ENCODE measurements at regions of chr3 and their contacts with region 1.

Region 1: GRCh38 chr3:129316131-129317013 is 37.7 kb downstream of the HMCES start:
- DNase-seq: peak; percentile 80 to 96 (median 88)
- ATAC-seq: peak; percentile 75
- H3K4me3 ChIP-seq: peak overlapping the region; percentile 89
- H3K4me3 Mint-ChIP-seq: peak overlapping the region; percentile 70 to 97 (median 88)
- H3K27ac ChIP-seq: peak overlapping the region; percentile 88
- H3K27ac Mint-ChIP-seq: peak overlapping the region; percentile 80 to 94 (median 88)
- H3K4me1 ChIP-seq: peaks cover 5 to 10% of the 10 kb centered on the region in 2 donors
- H3K4me1 Mint-ChIP-seq: peaks cover 17 to 31% (median 24%) of the 10 kb centered on the region in 7 donors
- H3K27me3 ChIP-seq: no peaks in the 10 kb centered on the region
- H3K27me3 Mint-ChIP-seq: peaks cover 0 to 2% (median 0%) of the 10 kb centered on the region in 5 donors

Region 2: GRCh38 chr3:128051837-128052594 is 1264.4 kb before region 1 on chr3 and contains the start of gene SEC61A1:
- CTCF ChIA-PET with region 1: interaction called, 3 read pairs
- POLR2A ChIA-PET with region 1: no interaction called
- intact Hi-C with region 1: loop called in 1 of 2 experiments (anchors 5 kb)
- DNase-seq: peak; percentile 94 to 97 (median 95)
- ATAC-seq: peak; percentile 97
- H3K4me3 ChIP-seq: peak within 1 kb of the TSS; percentile 82
- H3K4me3 Mint-ChIP-seq: peak within 1 kb of the TSS; percentile 90 to 98 (median 96)
- H3K27ac ChIP-seq: peak within 1 kb of the TSS; percentile 95
- H3K27ac Mint-ChIP-seq: peak within 1 kb of the TSS; percentile 87 to 99 (median 97)
- H3K4me1 ChIP-seq: peaks cover 28 to 37% of the 10 kb centered on the region in 2 donors
- H3K4me1 Mint-ChIP-seq: peaks cover 36 to 44% (median 43%) of the 10 kb centered on the region in 7 donors
- H3K27me3 ChIP-seq: no peaks in the 10 kb centered on the region
- H3K27me3 Mint-ChIP-seq: peaks cover 0 to 17% (median 1%) of the 10 kb centered on the region in 5 donors
- total RNA-seq, gene SEC61A1: 110 to 219 (median 132) TPM

Region 3: DNA sequence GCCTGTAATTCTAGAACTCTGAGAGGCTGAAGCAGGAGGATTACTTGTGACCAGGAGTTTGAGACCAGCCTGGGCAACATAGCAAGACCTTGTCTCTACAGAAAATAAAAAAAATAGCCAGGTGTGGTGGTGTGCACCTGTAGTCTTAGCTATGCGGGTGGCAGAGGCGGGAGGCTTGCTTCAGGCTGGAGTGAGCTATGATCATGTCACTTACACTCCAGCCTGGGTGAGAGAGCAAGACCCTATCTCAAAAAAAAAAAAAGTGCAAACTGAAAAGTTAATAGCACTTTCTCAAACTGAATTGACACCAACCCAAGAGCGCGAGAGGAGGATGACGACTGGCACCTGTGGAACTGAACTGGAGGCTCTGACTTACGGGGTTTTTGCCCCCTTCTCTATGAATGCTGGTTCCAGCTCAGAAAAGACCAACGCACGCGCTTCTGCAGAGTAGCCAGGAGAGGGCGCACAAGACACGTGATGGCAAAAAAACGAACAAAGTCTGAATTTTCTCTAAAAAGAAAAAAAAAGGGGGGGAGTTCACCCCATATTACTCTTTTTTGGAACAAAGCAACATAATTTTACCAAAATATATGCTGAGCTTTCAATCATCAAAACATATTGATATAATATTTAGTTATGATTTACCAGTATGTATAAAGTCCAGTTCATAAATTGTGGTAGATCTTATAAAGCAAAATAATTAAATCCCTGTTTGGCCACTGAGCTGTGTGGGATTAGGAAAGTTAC is 346.2 kb before region 1 on chr3:
- CTCF ChIA-PET with region 1: interaction called, 5 read pairs
- POLR2A ChIA-PET with region 1: interaction called, 8 read pairs
- intact Hi-C with region 1: loop called (anchors 1 to 5 kb)
- DNase-seq: peak; percentile 43 to 75 (median 64)
- ATAC-seq: peak; percentile 89
- H3K4me3 ChIP-seq: no peak overlapping the region
- H3K4me3 Mint-ChIP-seq: peak overlapping the region in 1 of 10 donors; percentile 11
- H3K27ac ChIP-seq: no peak overlapping the region
- H3K27ac Mint-ChIP-seq: no peak overlapping the region
- H3K4me1 ChIP-seq: no peaks in the 10 kb centered on the region
- H3K4me1 Mint-ChIP-seq: peaks cover 0 to 7% (median 6%) of the 10 kb centered on the region in 7 donors
- H3K27me3 ChIP-seq: no peaks in the 10 kb centered on the region
- H3K27me3 Mint-ChIP-seq: peaks cover 0 to 5% (median 0%) of the 10 kb centered on the region in 5 donors

Region 4: GRCh38 chr3:129183569-129184395 is 132.6 kb before region 1 on chr3 and contains the start of gene CNBP:
- CTCF ChIA-PET with region 1: interaction called, 3 read pairs
- POLR2A ChIA-PET with region 1: interaction called, 30 read pairs
- intact Hi-C with region 1: loop called (anchors 1 to 5 kb)
- DNase-seq: peak; percentile 90 to 96 (median 94)
- ATAC-seq: peak; percentile 100
- H3K4me3 ChIP-seq: peak within 1 kb of the TSS; percentile 74
- H3K4me3 Mint-ChIP-seq: peak within 1 kb of the TSS; percentile 93 to 99 (median 96)
- H3K27ac ChIP-seq: peak within 1 kb of the TSS; percentile 100
- H3K27ac Mint-ChIP-seq: peak within 1 kb of the TSS; percentile 91 to 99 (median 97)
- H3K4me1 ChIP-seq: peaks cover 18 to 27% of the 10 kb centered on the region in 2 donors
- H3K4me1 Mint-ChIP-seq: peaks cover 32 to 48% (median 42%) of the 10 kb centered on the region in 7 donors
- H3K27me3 ChIP-seq: no peaks in the 10 kb centered on the region
- H3K27me3 Mint-ChIP-seq: no peaks in the 10 kb centered on the region
- total RNA-seq, gene CNBP: 259 to 366 (median 327) TPM

Region 5: DNA sequence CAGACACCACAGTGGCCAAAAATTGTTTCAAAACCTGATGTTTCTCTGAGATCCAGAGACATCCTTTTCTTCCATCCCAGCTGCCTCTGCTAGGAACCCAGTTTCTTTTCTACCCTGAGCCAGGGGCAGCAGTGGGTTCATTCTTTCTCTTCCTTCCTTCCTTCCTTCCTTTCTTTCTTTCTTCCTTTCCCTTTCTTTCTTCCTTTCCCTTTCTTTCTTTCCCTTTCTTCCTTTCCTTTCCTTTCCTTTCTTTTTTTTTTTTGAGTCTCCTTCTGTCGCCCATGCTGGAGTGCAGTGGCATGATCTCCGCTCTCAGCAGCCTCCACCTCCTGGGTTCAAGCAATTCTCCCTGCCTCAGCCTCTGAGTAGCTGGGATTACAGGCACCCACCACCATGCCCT is 97.6 kb before region 1 on chr3:
- CTCF ChIA-PET with region 1: no interaction called
- POLR2A ChIA-PET with region 1: no interaction called
- intact Hi-C with region 1: no loop called
- DNase-seq: no peak
- ATAC-seq: no peak
- H3K4me3 ChIP-seq: no peak overlapping the region
- H3K4me3 Mint-ChIP-seq: no peak overlapping the region
- H3K27ac ChIP-seq: no peak overlapping the region
- H3K27ac Mint-ChIP-seq: no peak overlapping the region
- H3K4me1 ChIP-seq: no peaks in the 10 kb centered on the region
- H3K4me1 Mint-ChIP-seq: peaks cover 0 to 3% (median 0%) of the 10 kb centered on the region in 7 donors
- H3K27me3 ChIP-seq: no peaks in the 10 kb centered on the region
- H3K27me3 Mint-ChIP-seq: peaks cover 0 to 3% (median 0%) of the 10 kb centered on the region in 5 donors

Region 6: DNA sequence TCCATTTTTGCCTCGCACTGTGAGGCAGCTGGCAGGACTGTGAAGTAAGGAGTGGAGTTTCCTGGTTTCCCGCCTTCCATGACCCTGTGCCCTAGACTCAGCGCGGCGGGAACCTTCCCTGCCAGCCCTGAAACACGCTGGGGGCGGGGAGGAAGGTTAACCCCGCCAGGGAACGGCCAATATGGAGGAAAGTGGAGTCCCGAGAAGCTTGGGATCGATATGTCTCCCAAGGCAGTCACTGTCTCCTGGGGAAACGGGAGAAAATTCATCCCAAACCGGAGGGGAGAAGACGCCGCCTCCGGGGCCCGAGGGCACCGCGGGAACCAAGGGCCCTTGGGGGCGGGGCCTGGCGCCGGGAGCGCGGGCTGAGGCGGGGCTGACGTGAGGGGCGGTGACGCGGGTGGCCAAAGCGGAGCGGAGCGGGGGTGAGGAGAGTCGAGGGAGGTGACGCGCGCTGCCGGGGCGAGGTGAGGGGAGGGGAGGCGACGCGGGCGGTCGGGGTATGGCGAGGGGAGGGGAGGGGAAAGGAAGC is 37.9 kb before region 1 on chr3 and contains the start of gene HMCES:
- CTCF ChIA-PET with region 1: interaction called, 19 read pairs
- POLR2A ChIA-PET with region 1: interaction called, 251 read pairs
- intact Hi-C with region 1: loop called (anchors 1 kb)
- DNase-seq: peak; percentile 92 to 98 (median 95)
- ATAC-seq: peak; percentile 98
- H3K4me3 ChIP-seq: peak within 1 kb of the TSS; percentile 99
- H3K4me3 Mint-ChIP-seq: peak within 1 kb of the TSS; percentile 95 to 99 (median 98)
- H3K27ac ChIP-seq: peak within 1 kb of the TSS; percentile 99
- H3K27ac Mint-ChIP-seq: peak within 1 kb of the TSS; percentile 89 to 100 (median 98)
- H3K4me1 ChIP-seq: peaks cover 14 to 29% of the 10 kb centered on the region in 2 donors
- H3K4me1 Mint-ChIP-seq: peaks cover 21 to 50% (median 37%) of the 10 kb centered on the region in 7 donors
- H3K27me3 ChIP-seq: no peaks in the 10 kb centered on the region
- H3K27me3 Mint-ChIP-seq: no peaks in the 10 kb centered on the region
- total RNA-seq, gene HMCES: 45.7 to 56.4 (median 52.5) TPM

Region 7: DNA sequence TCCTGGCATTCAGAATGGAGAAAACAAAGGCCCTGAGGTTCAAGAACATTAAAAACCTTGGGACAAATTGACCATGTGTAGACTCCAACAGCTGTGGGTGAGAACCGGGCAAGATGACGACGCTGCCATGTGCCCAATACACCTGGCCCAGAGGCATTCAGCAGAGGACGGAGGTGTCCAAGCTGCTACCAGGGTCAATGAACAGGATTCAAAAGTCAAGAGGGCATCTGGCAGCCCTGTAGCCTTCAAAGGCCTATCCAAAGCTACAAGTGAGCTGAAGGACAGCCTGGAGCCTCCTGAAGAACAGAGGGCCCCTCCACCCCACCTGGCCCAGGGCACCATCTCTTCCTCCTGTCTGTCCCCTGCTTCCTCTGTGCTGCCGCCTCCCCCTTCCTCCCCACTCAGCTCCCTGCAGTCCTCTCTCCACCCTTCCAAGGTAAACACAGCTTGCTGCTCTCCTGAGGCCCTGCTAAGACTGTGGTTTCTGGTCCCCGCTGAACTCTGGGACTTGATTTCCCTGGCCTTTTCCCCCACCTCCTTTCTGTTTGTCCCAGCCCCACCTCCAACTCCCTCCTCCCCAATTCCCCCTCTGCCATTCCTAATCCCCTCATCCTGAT is 19.8 kb after region 1 on chr3:
- CTCF ChIA-PET with region 1: no interaction called
- POLR2A ChIA-PET with region 1: interaction called, 11 read pairs
- intact Hi-C with region 1: no loop called
- DNase-seq: no peak
- ATAC-seq: no peak
- H3K4me3 ChIP-seq: no peak overlapping the region
- H3K4me3 Mint-ChIP-seq: no peak overlapping the region
- H3K27ac ChIP-seq: no peak overlapping the region
- H3K27ac Mint-ChIP-seq: no peak overlapping the region
- H3K4me1 ChIP-seq: no peaks in the 10 kb centered on the region
- H3K4me1 Mint-ChIP-seq: peaks cover 0 to 6% (median 0%) of the 10 kb centered on the region in 7 donors
- H3K27me3 ChIP-seq: no peaks in the 10 kb centered on the region
- H3K27me3 Mint-ChIP-seq: peaks cover 0 to 3% (median 0%) of the 10 kb centered on the region in 5 donors

Region 8: GRCh38 chr3:129365296-129366136 is 49.1 kb after region 1 on chr3:
- CTCF ChIA-PET with region 1: no interaction called
- POLR2A ChIA-PET with region 1: no interaction called
- intact Hi-C with region 1: no loop called
- DNase-seq: no peak
- ATAC-seq: no peak
- H3K4me3 ChIP-seq: no peak overlapping the region
- H3K4me3 Mint-ChIP-seq: no peak overlapping the region
- H3K27ac ChIP-seq: no peak overlapping the region
- H3K27ac Mint-ChIP-seq: no peak overlapping the region
- H3K4me1 ChIP-seq: no peaks in the 10 kb centered on the region
- H3K4me1 Mint-ChIP-seq: peaks cover 0 to 1% (median 0%) of the 10 kb centered on the region in 7 donors
- H3K27me3 ChIP-seq: no peaks in the 10 kb centered on the region
- H3K27me3 Mint-ChIP-seq: no peaks in the 10 kb centered on the region